Right lobe of liver (tissue), 6 donors: ENCODE measurements at regions of chr10 and their contacts with region 1.

Region 1: GRCh38 chr10:103602028-103602851 is 108.7 kb downstream of the NEURL1 start:
- DNase-seq: no peak
- ATAC-seq: no peak
- H3K4me3 ChIP-seq: no peak overlapping the region
- H3K27ac ChIP-seq: no peak overlapping the region
- H3K4me1 ChIP-seq: no peaks in the 10 kb centered on the region
- H3K27me3 ChIP-seq: no peaks in the 10 kb centered on the region
- CTCF ChIP-seq: no peak
- POLR2A ChIP-seq: no peak

Region 2: DNA sequence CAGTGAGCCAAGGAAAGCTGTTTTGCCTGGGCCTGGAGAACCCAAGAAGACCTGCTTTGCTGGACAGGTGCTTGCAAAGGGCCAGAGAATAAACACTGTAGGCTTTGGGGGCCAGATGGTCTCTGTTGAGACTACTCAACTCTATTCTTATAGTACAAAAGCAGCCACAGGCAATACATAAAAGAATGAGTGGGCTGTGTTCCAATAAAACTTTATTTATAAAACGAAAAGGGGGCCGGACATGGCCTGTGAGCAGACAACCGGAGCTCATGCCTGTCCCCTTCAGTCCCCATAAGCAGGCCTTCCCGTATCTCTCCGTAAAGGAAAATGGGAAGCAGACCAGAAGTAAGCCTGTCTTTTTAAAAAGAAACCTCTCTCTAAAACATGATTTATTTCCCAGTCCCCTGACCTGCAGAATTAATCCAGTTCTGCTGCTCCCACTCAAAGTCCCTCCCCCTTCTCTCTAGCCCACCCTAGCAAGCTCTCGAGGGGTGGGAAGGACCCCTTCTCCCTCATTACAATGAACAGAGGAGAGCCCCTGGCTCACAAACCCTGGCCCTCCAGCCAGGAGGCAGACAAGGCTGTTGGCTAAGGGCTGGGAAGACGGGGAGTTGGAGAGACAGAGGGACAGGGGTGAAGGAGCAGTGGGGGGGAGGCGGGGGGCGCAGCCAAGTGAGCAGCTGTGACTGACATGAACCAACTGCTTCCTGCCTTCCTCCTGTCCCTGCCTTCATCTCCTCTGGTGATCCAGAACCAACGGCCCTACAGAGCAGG is 69.1 kb after region 1 on chr10:
- intact Hi-C with region 1: no loop called
- DNase-seq: no peak
- ATAC-seq: no peak
- H3K4me3 ChIP-seq: no peak overlapping the region
- H3K27ac ChIP-seq: no peak overlapping the region
- H3K4me1 ChIP-seq: no peaks in the 10 kb centered on the region
- H3K27me3 ChIP-seq: no peaks in the 10 kb centered on the region
- CTCF ChIP-seq: no peak
- POLR2A ChIP-seq: no peak

Region 3: DNA sequence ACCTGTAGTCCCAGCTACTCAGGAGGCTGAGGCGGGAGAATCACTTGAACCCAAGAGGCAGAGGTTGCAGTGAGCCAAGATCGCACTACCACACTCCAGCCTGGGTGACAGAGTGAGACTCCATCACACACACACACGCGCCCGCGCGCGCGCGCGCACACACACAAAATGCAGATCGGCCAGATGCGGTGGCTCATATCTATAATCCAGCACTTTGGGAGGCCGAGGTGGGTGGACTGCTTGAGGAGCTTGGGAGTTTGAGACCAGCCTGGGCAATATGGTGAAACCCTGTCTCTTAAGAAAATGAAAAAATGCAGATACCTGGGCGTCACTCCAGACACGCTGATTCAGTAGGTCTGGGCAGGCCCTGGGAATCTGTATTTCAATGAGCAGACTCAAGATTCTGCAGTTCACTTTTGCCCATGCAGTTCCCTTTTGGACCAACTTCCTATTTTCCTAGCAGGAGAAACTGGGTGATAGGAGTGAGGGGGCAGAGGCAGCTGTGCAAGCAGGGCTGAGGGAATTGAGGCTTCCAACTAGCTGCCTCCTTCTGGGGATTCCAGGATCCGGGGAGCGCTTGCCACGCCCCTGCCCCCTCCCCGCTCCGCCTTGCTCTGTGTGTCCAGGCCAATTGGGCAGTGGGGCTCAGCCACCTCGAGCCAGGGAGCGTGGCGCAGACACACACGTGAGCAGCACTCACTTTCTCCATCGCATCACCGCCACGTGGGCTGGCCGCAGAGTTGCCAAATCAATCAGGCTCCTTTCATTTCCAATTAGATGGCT is 79.6 kb after region 1 on chr10:
- intact Hi-C with region 1: loop called in 1 of 2 experiments (anchors 5 kb)
- DNase-seq: no peak
- ATAC-seq: no peak
- H3K4me3 ChIP-seq: no peak overlapping the region
- H3K27ac ChIP-seq: no peak overlapping the region
- H3K4me1 ChIP-seq: no peaks in the 10 kb centered on the region
- H3K27me3 ChIP-seq: no peaks in the 10 kb centered on the region
- CTCF ChIP-seq: no peak
- POLR2A ChIP-seq: no peak

Region 4: GRCh38 chr10:103692952-103693802 is 90.9 kb after region 1 on chr10:
- intact Hi-C with region 1: loop called in 1 of 2 experiments (anchors 5 kb)
- DNase-seq: no peak
- ATAC-seq: no peak
- H3K4me3 ChIP-seq: no peak overlapping the region
- H3K27ac ChIP-seq: no peak overlapping the region
- H3K4me1 ChIP-seq: no peaks in the 10 kb centered on the region
- H3K27me3 ChIP-seq: no peaks in the 10 kb centered on the region
- CTCF ChIP-seq: no peak
- POLR2A ChIP-seq: no peak